Activated CD4-positive, alpha-beta T cell treated with anti-CD3 and anti-CD28 coated beads, Interleukin-2, amount 10 ng/mL, durations not matched to agents 24 days and 14 days (primary cell): ENCODE measurements at regions of chr16 and their contacts with region 1.

Region 1: DNA sequence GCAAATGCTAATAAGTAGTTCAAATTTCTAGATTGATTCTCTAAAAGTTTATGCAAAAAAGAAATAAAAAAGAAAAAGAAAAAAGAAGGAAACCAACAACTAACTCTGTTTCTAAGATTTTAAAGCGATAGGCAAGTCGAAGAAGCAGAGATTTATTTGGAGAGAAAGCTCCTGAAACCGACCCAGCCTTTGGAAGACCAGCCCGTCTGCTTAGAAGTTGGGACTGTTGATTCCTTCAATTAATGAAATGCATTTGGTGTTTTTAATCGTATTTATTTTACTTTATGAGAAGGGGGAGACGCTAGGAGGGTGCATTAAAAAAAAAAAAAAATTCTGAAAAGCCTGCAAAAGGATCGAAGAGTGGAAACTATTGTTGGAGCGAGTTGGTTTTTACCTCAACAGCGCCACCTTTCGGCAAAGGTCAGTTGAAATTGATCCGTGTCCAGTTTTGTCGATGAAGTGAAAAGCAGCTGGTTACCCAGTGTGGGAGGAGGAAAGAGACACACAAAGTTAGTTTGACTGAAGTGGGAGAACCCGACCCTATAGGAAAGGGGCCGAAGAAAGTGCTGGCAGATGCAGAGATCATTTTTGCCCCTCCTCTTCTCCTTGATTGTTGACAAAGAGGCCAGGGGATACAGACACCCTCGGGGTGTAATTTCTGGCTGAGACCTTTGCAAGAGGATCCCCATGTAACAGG is 1.5 kb upstream of the MAF start:
- DNase-seq: peak; percentile 95
- H3K4me3 Mint-ChIP-seq: peak overlapping the region; percentile 99
- H3K27ac Mint-ChIP-seq: peak overlapping the region; percentile 99
- H3K4me1 Mint-ChIP-seq: peaks cover 47% of the 10 kb centered on the region
- H3K27me3 Mint-ChIP-seq: peaks cover 8% of the 10 kb centered on the region

Region 2: GRCh38 chr16:78503602-78504001 is 1098.5 kb before region 1 on chr16:
- intact Hi-C with region 1: loop called (anchors 1 kb)
- DNase-seq: peak; percentile 85
- H3K4me3 Mint-ChIP-seq: no peak overlapping the region
- H3K27ac Mint-ChIP-seq: no peak overlapping the region
- H3K4me1 Mint-ChIP-seq: no peaks in the 10 kb centered on the region
- H3K27me3 Mint-ChIP-seq: no peaks in the 10 kb centered on the region

Region 3: DNA sequence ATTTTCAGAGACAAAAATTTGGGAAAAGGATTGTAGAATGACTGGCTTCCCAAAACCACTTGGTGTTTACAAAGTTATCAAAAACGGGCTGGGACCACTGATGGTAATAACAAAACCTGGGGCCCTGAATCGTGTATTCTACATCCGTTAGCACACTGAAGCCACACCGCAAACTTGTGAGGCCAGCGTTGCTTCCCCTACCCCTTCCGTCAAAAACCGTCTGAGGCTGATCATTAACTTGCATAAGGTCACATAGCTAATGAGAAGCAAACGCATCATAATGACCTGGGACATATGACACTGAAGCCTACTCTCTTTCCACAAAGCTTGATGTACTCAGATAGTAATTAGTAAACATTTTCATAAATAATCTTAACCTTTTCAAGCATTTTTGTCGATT is 705.8 kb before region 1 on chr16:
- intact Hi-C with region 1: loop called (anchors 1 kb)
- DNase-seq: no peak
- H3K4me3 Mint-ChIP-seq: no peak overlapping the region
- H3K27ac Mint-ChIP-seq: peak overlapping the region; percentile 56
- H3K4me1 Mint-ChIP-seq: peaks cover 33% of the 10 kb centered on the region
- H3K27me3 Mint-ChIP-seq: peaks cover 2% of the 10 kb centered on the region

Region 4: GRCh38 chr16:79217375-79218011 is 384.6 kb before region 1 on chr16:
- intact Hi-C with region 1: loop called (anchors 2 kb)
- DNase-seq: peak; percentile 80
- H3K4me3 Mint-ChIP-seq: peak overlapping the region; percentile 4
- H3K27ac Mint-ChIP-seq: peak overlapping the region; percentile 50
- H3K4me1 Mint-ChIP-seq: peaks cover 22% of the 10 kb centered on the region
- H3K27me3 Mint-ChIP-seq: peaks cover 7% of the 10 kb centered on the region

Region 5: DNA sequence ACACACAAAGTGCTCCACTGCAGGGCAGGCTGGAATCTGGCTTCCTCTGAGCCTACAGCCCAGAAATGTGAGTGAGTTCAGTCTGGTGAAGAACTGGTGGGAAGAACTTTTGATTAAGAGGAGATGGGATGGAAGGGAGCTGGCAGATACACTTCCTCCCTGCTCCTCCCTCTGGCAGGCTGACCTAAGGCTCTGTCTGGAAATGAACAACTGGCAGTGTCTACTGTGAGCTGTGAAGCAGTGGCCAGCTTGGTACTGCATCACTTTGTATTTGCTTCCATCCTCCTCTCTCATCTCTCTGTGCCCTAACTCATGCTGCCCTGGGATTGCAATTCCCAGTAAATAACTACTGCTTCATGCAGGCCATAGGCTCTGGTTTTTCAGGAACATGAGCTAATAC is 47.2 kb before region 1 on chr16:
- intact Hi-C with region 1: no loop called
- DNase-seq: no peak
- H3K4me3 Mint-ChIP-seq: no peak overlapping the region
- H3K27ac Mint-ChIP-seq: no peak overlapping the region
- H3K4me1 Mint-ChIP-seq: no peaks in the 10 kb centered on the region
- H3K27me3 Mint-ChIP-seq: peaks cover 16% of the 10 kb centered on the region

Region 6: DNA sequence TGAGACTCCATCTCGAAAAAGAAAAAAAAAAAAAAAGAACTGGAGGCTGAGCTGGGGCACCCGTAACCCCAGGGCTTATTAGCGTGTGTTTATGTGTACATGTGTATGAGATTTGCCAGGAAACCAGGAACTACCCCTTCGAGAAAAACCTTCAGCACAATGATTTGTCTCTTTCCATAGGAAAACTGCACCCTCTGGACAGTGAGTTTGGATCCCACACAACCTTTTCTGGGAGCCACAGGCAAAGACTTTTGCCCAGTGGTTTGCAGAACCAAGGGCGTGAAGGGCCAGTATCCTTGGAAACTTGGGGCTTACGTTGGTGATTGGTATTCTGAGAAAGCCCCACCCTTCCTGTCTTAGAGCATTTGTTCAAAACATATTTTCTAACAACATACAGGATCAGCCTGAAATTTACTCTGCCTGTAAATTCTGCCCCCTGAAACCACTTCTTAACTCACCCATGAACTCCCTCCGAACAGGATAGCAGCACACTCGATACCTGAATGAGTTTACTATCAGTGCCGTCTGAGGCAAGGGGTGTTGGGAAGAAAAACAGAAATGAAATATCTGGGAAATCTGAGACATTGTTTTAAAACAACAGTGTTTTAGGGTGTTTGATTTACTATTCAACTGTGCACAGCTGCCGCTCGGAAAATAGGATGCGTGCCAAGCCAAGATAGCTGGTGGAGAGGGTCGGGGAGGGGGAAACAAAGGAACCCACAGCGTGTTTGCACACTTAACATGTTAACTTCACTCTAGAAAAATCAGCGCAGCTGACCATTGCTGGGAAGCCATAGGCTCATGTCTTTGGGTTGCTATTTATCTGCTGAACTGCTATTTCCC is 38.7 kb after region 1 on chr16:
- intact Hi-C with region 1: loop called (anchors 5 kb)
- DNase-seq: peak; percentile 82
- H3K4me3 Mint-ChIP-seq: peak overlapping the region; percentile 44
- H3K27ac Mint-ChIP-seq: peak overlapping the region; percentile 76
- H3K4me1 Mint-ChIP-seq: peaks cover 39% of the 10 kb centered on the region
- H3K27me3 Mint-ChIP-seq: peaks cover 5% of the 10 kb centered on the region

Region 7: GRCh38 chr16:79740252-79740651 is 138.2 kb after region 1 on chr16:
- intact Hi-C with region 1: no loop called
- DNase-seq: no peak
- H3K4me3 Mint-ChIP-seq: no peak overlapping the region
- H3K27ac Mint-ChIP-seq: no peak overlapping the region
- H3K4me1 Mint-ChIP-seq: no peaks in the 10 kb centered on the region
- H3K27me3 Mint-ChIP-seq: peaks cover 13% of the 10 kb centered on the region

Region 8: GRCh38 chr16:80084685-80085084 is 482.6 kb after region 1 on chr16:
- intact Hi-C with region 1: loop called (anchors 10 kb)
- DNase-seq: peak; percentile 67
- H3K4me3 Mint-ChIP-seq: no peak overlapping the region
- H3K27ac Mint-ChIP-seq: no peak overlapping the region
- H3K4me1 Mint-ChIP-seq: no peaks in the 10 kb centered on the region
- H3K27me3 Mint-ChIP-seq: peaks cover 6% of the 10 kb centered on the region